Heart right ventricle (tissue), 16 donors: ENCODE measurements at regions of chr6 and their contacts with region 1.

Region 1: GRCh38 chr6:110938171-110938570 is 20.3 kb upstream of the GTF3C6 start:
- DNase-seq: no peak
- ATAC-seq: no peak
- H3K4me3 ChIP-seq: no peak overlapping the region
- H3K27ac ChIP-seq: no peak overlapping the region
- H3K4me1 ChIP-seq: peaks cover 0 to 17% (median 0%) of the 10 kb centered on the region in 9 donors
- H3K27me3 ChIP-seq: no peaks in the 10 kb centered on the region
- CTCF ChIP-seq: no peak

Region 2: GRCh38 chr6:110699780-110700179 is 238.4 kb before region 1 on chr6:
- intact Hi-C with region 1: loop called in 1 of 10 experiments (anchors 5 kb)
- DNase-seq: no peak
- ATAC-seq: no peak
- H3K4me3 ChIP-seq: no peak overlapping the region
- H3K27ac ChIP-seq: no peak overlapping the region
- H3K4me1 ChIP-seq: peaks cover 0 to 15% (median 0%) of the 10 kb centered on the region in 9 donors
- H3K27me3 ChIP-seq: no peaks in the 10 kb centered on the region
- CTCF ChIP-seq: no peak

Region 3: DNA sequence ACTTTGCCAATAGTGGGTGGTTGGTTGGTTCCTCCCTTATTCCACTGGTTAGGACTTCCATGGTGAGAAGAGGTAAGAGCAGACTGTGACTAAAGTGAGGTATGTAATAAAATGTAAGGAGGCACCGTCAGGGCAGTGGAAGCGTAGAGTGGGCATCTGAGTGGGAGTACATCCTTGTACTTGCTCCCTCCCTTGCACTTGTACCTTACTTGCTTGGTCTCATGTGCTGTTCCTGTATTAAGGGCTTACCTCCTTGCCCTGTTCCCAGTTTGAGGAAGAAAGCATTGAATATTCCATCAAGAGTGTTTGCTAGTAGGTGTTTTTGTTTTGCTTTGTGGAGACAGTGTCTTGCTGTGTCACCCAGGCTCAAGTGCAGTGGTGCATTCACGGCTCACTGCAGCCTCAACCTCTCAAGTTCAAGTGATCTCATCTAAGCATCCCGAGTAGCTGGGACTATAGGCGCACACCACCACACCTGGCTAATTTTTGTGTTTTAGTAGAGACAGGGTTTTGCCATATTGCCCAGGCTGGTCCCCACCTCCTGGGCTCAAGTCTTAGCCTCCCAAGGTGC is 38.1 kb before region 1 on chr6:
- intact Hi-C with region 1: no loop called
- DNase-seq: no peak
- ATAC-seq: no peak
- H3K4me3 ChIP-seq: no peak overlapping the region
- H3K27ac ChIP-seq: no peak overlapping the region
- H3K4me1 ChIP-seq: no peaks in the 10 kb centered on the region
- H3K27me3 ChIP-seq: no peaks in the 10 kb centered on the region
- CTCF ChIP-seq: no peak